A549 (cell line): ENCODE measurements at regions of chr12 and their contacts with region 1.

Region 1: DNA sequence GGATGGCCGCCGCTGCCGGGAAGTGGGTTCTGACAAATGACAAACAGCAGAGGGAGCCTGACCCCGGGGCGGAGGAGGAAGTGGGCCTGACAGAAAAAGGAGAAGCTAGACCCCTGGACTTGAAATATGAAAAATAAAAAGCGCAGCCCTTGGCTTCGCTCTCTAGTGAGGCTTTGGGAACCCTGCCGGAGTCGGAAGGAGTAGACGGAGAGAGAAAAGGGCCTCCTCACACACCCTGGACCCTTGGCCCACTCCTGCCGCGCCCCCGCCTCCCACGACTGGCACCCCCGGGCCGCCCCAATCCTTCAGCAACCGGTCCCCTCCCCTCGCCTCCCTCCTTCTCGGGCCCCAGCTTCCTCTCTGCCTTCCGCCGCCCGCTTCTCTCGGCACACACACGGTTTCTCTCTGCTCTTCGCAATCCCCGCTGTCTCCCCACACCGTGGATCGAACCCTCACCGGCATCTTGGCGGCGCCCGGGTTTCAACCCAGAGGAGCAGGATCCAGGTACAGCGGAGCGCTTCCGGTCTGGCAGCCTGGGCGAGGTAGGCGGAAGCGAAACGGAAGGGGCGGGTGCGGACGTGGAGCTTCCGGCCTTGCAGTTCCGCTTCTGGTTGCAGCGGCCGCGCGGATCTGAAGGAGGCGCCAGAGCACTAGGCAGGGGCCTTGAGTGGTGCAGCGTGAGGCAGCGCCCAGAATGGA is at the start of gene ARPC3:
- DNase-seq: peak; percentile 86 to 98
- ATAC-seq: peak; percentile 97 to 100
- H3K4me3 ChIP-seq: peak within 1 kb of the TSS; percentile 73
- H3K27ac ChIP-seq: peak within 1 kb of the TSS; percentile 88 to 98
- H3K4me1 ChIP-seq: peaks cover 13% of the 10 kb centered on the region; the same call in 1 of the 3 replicates
- CTCF ChIP-seq: peak; percentile 73
- EP300 ChIP-seq: no peak
- POLR2A ChIP-seq: peak; percentile 50; the same call in 1 of the 2 replicates
- RAD21 ChIP-seq: peak; percentile 84 to 89
- polyA plus RNA-seq, gene ARPC3: 83.3 and 171 TPM in 2 replicates

Region 2: DNA sequence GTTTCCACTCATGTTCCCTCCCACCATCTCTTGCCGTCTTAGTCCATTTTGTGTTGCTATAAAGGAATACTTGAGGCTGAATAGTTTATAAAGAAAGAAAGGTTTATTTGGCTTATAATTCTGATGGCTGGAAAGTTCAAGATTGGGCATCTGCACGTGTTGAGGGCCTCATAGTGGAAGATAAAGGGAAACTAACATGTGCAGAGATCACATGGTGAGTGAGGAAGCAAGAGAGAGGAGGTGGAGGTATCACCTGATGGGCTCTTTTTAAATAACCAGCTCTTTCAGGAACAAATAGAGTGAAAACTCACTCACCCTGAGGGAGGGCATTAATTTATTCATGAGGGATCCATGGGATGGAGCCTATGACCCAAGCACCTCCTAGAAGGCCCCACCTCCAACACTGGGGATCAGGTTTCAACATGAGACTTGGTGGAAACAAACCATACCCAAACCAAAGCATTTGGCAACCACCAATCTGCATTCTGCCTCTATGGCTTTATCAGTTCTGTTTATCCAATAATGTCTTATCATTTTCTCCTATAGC is 1072.7 kb before region 1 on chr12:
- CTCF ChIA-PET with region 1: no interaction called
- POLR2A ChIA-PET with region 1: no interaction called
- DNase-seq: no peak
- ATAC-seq: no peak
- H3K4me3 ChIP-seq: no peak overlapping the region
- H3K27ac ChIP-seq: no peak overlapping the region
- H3K4me1 ChIP-seq: no peaks in the 10 kb centered on the region
- CTCF ChIP-seq: no peak
- EP300 ChIP-seq: no peak
- POLR2A ChIP-seq: no peak
- RAD21 ChIP-seq: no peak

Region 3: DNA sequence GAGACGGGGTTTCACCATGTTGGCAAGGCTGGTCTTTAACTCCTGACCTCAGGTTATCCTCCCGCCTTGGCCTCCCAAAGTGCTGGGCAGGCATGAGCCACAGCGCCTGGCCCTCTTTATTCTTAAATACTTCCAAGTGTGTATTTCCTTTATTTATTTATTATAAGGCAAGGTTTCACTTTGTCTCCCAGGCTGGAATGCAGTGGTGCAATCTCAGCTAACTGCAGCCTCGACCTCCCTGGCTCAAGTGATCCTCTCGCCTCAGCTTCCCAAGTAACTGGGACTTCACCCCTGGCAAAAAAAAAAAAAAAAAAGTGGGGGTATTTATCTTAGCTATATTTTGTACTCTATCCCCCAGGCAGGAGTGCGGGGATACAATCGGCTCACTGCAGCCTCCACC is 25.5 kb after region 1 on chr12:
- CTCF ChIA-PET with region 1: interaction called, 133 read pairs
- POLR2A ChIA-PET with region 1: no interaction called
- DNase-seq: no peak
- ATAC-seq: no peak
- H3K4me3 ChIP-seq: no peak overlapping the region
- H3K27ac ChIP-seq: no peak overlapping the region
- H3K4me1 ChIP-seq: no peaks in the 10 kb centered on the region
- CTCF ChIP-seq: no peak
- EP300 ChIP-seq: no peak
- POLR2A ChIP-seq: no peak
- RAD21 ChIP-seq: no peak

Region 4: GRCh38 chr12:110613771-110614684 is 164.1 kb after region 1 on chr12 and contains the start of gene TCTN1:
- CTCF ChIA-PET with region 1: interaction called, 5 read pairs
- POLR2A ChIA-PET with region 1: interaction called, 11 read pairs
- DNase-seq: peak; percentile 95 to 98
- ATAC-seq: peak; percentile 99 to 100
- H3K4me3 ChIP-seq: peak within 1 kb of the TSS; percentile 78
- H3K27ac ChIP-seq: peak within 1 kb of the TSS; percentile 82 to 86
- H3K4me1 ChIP-seq: peaks cover 8% of the 10 kb centered on the region; the same call in 1 of the 3 replicates
- CTCF ChIP-seq: no peak
- EP300 ChIP-seq: no peak
- POLR2A ChIP-seq: peak; percentile 86
- RAD21 ChIP-seq: no peak; a peak in 1 of 5 replicates
- polyA plus RNA-seq, gene TCTN1: 56.9 and 62.2 TPM in 2 replicates